B cell (primary cell): ENCODE measurements at regions of chr6 and their contacts with region 1.

Region 1: DNA sequence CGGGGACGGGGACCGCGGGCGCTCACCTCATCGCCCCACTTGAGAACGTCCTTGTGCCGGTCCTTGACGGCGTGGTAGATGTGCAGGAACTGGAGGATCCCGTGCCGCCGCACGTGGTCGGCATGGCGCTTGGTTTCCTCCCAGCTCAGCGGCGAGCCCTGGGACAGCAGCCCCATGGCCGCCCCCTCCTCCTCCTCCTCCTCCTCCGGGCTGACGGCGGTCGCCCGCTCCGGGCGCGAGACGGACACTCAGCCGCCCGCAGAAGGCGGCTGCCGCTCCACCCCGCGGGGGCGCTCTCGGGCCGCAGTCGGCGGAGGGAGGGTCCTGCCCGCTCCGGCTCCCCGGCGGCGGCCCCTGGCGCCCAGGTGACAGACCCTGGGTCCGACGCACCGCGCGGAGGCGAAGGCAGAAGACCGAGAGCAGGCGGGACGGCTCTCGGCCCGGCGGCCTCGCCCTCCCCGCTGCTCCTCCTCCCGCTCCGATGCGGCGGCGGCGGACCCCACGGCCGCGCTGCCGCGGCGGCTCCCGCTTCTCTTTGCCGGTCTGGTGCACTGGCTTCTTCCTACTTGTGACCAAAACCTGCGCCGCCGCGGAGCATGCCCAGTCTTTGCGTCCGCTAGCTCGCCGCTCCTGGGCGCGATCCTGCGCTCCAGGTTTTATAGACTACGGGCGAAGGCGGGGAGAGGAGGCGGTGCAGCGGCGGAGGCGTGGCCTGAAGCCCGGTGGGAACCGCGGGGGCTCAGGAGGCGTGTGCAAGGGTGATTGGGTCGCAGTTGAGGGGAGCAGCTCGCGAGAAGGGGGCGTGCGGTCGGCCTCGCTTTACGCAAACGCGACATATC is at the start of gene GCLC:
- DNase-seq: peak; percentile 95
- ATAC-seq: peak; percentile 67
- H3K4me3 ChIP-seq: peak within 1 kb of the TSS; percentile 45 to 81 (median 69)
- H3K4me3 Mint-ChIP-seq: peak within 1 kb of the TSS; percentile 97
- H3K27ac ChIP-seq: peak within 1 kb of the TSS in 1 of 2 donors; percentile 68
- H3K27ac Mint-ChIP-seq: peak within 1 kb of the TSS; percentile 93
- H3K4me1 ChIP-seq: peaks cover 22 to 32% of the 10 kb centered on the region in 2 donors
- H3K4me1 Mint-ChIP-seq: peaks cover 52% of the 10 kb centered on the region
- H3K27me3 ChIP-seq: no peaks in the 10 kb centered on the region
- H3K27me3 Mint-ChIP-seq: no peaks in the 10 kb centered on the region
- CTCF ChIP-seq: peak; percentile 81
- total RNA-seq, gene GCLC: 25.8 and 37.8 TPM in 2 replicates

Region 2: GRCh38 chr6:53064726-53065215 is 479.9 kb before region 1 on chr6:
- CTCF ChIA-PET with region 1: interaction called, 3 read pairs
- POLR2A ChIA-PET with region 1: interaction called, 4 read pairs
- intact Hi-C with region 1: loop called (anchors 1 kb)
- DNase-seq: peak; percentile 96
- ATAC-seq: peak; percentile 82
- H3K4me3 ChIP-seq: peak overlapping the region; percentile 83 to 99 (median 84)
- H3K4me3 Mint-ChIP-seq: peak overlapping the region; percentile 100
- H3K27ac ChIP-seq: peak overlapping the region; percentile 61 to 76
- H3K27ac Mint-ChIP-seq: peak overlapping the region; percentile 99
- H3K4me1 ChIP-seq: peaks cover 38 to 40% of the 10 kb centered on the region in 2 donors
- H3K4me1 Mint-ChIP-seq: peaks cover 63% of the 10 kb centered on the region
- H3K27me3 ChIP-seq: no peaks in the 10 kb centered on the region
- H3K27me3 Mint-ChIP-seq: no peaks in the 10 kb centered on the region
- CTCF ChIP-seq: no peak

Region 3: GRCh38 chr6:53581173-53581773 is 36.6 kb after region 1 on chr6:
- CTCF ChIA-PET with region 1: no interaction called
- POLR2A ChIA-PET with region 1: no interaction called
- intact Hi-C with region 1: no loop called
- DNase-seq: no peak
- ATAC-seq: no peak
- H3K4me3 ChIP-seq: no peak overlapping the region
- H3K4me3 Mint-ChIP-seq: no peak overlapping the region
- H3K27ac ChIP-seq: no peak overlapping the region
- H3K27ac Mint-ChIP-seq: no peak overlapping the region
- H3K4me1 ChIP-seq: no peaks in the 10 kb centered on the region
- H3K4me1 Mint-ChIP-seq: peaks cover 12% of the 10 kb centered on the region
- H3K27me3 ChIP-seq: no peaks in the 10 kb centered on the region
- H3K27me3 Mint-ChIP-seq: no peaks in the 10 kb centered on the region
- CTCF ChIP-seq: no peak

Region 4: DNA sequence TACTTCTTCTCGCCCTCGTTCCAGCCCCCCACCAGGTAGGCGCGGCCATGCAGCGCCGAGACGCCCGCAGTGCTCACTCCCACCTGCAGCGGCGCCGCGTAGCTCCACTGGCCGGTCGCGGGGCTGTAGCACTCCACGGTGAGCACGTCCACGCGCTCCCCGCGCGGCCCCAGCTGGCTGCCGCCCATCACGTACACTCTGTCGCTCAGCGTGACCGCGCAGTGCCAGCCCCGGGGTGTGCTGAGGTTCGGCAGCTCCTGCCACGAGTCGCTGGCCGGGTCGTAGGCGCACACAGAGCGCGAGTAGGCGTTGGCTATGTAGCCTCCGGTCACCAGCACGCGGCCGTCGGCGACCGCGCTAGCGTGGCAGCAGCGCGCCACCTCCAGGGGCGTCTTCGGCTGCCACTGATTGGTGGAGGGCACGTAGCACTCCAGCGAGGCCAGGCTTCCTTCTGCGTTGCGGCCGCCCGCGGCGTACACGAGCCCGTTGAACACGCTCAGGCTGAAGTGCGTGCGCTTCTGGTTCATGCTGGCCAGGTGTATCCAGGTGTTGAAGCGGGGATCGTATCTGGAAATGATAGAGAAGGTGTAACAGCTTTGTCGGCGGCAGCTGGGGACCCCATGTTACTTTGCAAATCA is 107.2 kb after region 1 on chr6:
- CTCF ChIA-PET with region 1: interaction called, 33 read pairs
- POLR2A ChIA-PET with region 1: interaction called, 4 read pairs
- intact Hi-C with region 1: loop called (anchors 1 kb)
- DNase-seq: peak; percentile 87
- ATAC-seq: peak; percentile 83
- H3K4me3 ChIP-seq: peak overlapping the region; percentile 64 to 96 (median 79)
- H3K4me3 Mint-ChIP-seq: peak overlapping the region; percentile 96
- H3K27ac ChIP-seq: peak overlapping the region; percentile 9 to 51
- H3K27ac Mint-ChIP-seq: peak overlapping the region; percentile 90
- H3K4me1 ChIP-seq: peaks cover 20 to 26% of the 10 kb centered on the region in 2 donors
- H3K4me1 Mint-ChIP-seq: peaks cover 20% of the 10 kb centered on the region
- H3K27me3 ChIP-seq: peaks cover 0 to 6% (median 0%) of the 10 kb centered on the region in 4 experiments
- H3K27me3 Mint-ChIP-seq: no peaks in the 10 kb centered on the region
- CTCF ChIP-seq: peak; percentile 24